ENCODE measurements at regions of chr10 and their contacts with region 1.

Region 1: GRCh38 chr10:43102063-43102828 is 25.4 kb downstream of the RET start:
- DNase-seq: no peak
- H3K4me3 ChIP-seq: no peak overlapping the region
- H3K27ac ChIP-seq: no peak overlapping the region
- H3K4me1 ChIP-seq: peaks cover 9 to 17% (median 13%) of the 10 kb centered on the region in 3 donors
- H3K27me3 ChIP-seq: peaks cover 0 to 59% (median 5%) of the 10 kb centered on the region in 4 donors
- CTCF ChIP-seq: no peak
- POLR2A ChIP-seq: no peak

Region 2: GRCh38 chr10:42872865-42873643 is 229.2 kb before region 1 on chr10:
- intact Hi-C with region 1: loop called (anchors 5 kb)
- DNase-seq: no peak
- H3K4me3 ChIP-seq: no peak overlapping the region
- H3K27ac ChIP-seq: no peak overlapping the region
- H3K4me1 ChIP-seq: peaks cover 0 to 14% (median 0%) of the 10 kb centered on the region in 3 donors
- H3K27me3 ChIP-seq: peaks cover 0 to 10% (median 0%) of the 10 kb centered on the region in 4 donors
- CTCF ChIP-seq: no peak
- POLR2A ChIP-seq: no peak

Region 3: GRCh38 chr10:42926843-42927242 is 175.4 kb before region 1 on chr10:
- intact Hi-C with region 1: no loop called
- DNase-seq: no peak
- H3K4me3 ChIP-seq: no peak overlapping the region
- H3K27ac ChIP-seq: no peak overlapping the region
- H3K4me1 ChIP-seq: no peaks in the 10 kb centered on the region
- H3K27me3 ChIP-seq: peaks cover 0 to 50% (median 0%) of the 10 kb centered on the region in 4 donors
- CTCF ChIP-seq: no peak
- POLR2A ChIP-seq: no peak

Measured in esophagus squamous epithelium (tissue), 5 donors.